Endothelial cell of umbilical vein (primary cell): ENCODE measurements at regions of chr3 and their contacts with region 1.

Region 1: DNA sequence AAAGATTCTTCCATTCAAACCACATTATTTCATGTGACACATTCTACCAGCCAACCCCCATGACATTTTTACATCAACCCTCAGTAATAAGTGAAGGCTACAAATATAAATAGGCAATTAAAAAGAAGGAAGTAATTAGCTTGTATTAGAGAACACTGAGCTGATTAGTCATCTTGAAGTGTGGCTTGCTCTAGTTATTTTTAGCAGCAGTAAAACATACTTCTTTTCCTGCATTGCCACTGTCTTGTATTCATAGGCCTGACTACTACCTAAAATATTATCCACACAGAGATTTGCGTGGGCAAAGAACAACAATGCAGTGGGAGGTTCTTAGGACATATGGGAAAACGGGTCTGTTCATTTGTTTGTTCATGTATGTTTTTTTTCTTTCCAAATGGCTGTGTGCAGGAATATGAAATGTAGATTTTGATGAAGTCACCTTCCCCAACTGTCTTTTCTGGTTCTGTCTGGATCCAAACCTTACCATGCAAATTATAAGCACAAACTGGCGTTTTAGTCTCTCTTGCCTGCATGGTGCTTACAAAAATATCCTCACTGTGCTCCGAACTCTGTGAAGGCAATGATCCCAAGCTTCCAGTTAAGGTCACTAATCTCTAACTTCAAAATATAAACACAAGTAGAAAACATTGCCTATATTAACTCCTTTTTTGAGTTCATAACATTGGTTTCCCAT is 31.5 kb upstream of the TM4SF4 start:
- DNase-seq: peak; percentile 77
- H3K4me3 ChIP-seq: no peak overlapping the region
- H3K27ac ChIP-seq: no peak overlapping the region
- H3K4me1 ChIP-seq: peaks cover 16% of the 10 kb centered on the region
- H3K27me3 ChIP-seq: no peaks in the 10 kb centered on the region
- CTCF ChIP-seq: no peak
- POLR2A ChIP-seq: no peak

Region 2: DNA sequence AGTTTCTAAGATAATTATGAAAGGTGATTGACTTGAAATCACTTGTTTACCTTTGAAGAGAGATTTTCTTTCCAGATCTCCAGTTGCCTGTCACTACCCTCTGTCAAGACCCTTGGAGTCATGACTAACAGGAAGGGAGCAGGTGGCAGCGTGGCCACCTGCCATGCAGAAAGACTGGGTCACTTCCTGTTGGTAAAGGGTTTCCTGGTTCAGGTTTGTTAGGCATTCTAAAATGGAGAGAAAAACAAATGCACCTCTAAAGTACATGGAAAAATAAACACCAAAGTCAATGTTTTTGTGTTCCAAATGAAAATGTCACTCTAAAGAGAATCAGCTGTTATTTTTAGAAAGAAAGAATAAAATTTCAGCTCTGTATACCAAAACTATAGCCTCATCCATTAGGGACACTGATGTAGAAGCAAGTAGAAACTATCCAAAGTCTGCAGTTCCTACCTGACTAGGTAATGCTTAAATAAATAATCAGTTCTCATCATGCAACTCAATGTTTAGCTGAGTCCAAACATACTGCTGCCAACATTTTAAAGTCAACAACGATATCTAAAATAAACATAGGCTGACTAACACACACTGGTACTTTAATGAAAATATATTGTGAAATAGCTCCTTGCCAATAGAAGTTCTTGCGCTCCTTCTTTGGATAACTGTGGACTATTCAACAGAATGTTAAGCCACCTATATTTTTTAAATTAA is 41.6 kb before region 1 on chr3:
- CTCF ChIA-PET with region 1: interaction called, 5 read pairs
- POLR2A ChIA-PET with region 1: no interaction called
- dilution Hi-C with region 1: no loop called
- intact Hi-C with region 1: loop called (anchors 5 kb)
- DNase-seq: peak; percentile 78
- H3K4me3 ChIP-seq: no peak overlapping the region
- H3K27ac ChIP-seq: peak overlapping the region; percentile 62
- H3K4me1 ChIP-seq: peaks cover 26% of the 10 kb centered on the region
- H3K27me3 ChIP-seq: no peaks in the 10 kb centered on the region
- CTCF ChIP-seq: no peak
- POLR2A ChIP-seq: no peak

Region 3: GRCh38 chr3:149702691-149703441 is 259.9 kb after region 1 on chr3:
- CTCF ChIA-PET with region 1: no interaction called
- POLR2A ChIA-PET with region 1: no interaction called
- dilution Hi-C with region 1: no loop called
- intact Hi-C with region 1: no loop called
- DNase-seq: no peak
- H3K4me3 ChIP-seq: no peak overlapping the region
- H3K27ac ChIP-seq: no peak overlapping the region
- H3K4me1 ChIP-seq: no peaks in the 10 kb centered on the region
- H3K27me3 ChIP-seq: no peaks in the 10 kb centered on the region
- CTCF ChIP-seq: no peak
- POLR2A ChIP-seq: no peak